WTC11 (cell line): ENCODE measurements at regions of chr22 and their contacts with region 1.

Region 1: DNA sequence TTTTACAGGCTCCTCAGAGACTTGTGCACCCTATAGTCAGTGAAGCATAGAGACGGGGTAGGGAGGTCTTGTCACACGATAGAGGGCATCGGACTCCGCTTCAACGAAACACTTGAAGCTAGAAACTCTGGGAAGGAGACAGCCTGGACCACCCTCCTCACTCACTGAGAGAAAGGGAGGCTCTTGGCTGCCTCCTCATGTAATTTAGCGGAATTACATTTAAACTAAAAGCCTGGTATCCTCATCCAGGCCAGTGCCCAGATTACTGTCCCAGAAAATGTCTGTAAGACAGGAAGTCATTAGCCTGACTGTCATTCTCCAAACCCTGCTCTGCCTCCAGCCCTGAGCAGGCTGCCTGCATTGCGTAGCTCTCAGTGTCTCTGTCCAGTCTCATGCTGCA is 36.0 kb downstream of the TTLL1 start:
- DNase-seq: peak; percentile 24
- ATAC-seq: peak; percentile 74
- H3K4me3 Mint-ChIP-seq: no peak overlapping the region
- H3K27ac Mint-ChIP-seq: no peak overlapping the region
- H3K4me1 Mint-ChIP-seq: no peaks in the 10 kb centered on the region
- H3K27me3 Mint-ChIP-seq: no peaks in the 10 kb centered on the region
- CTCF ChIP-seq: peak; percentile 60

Region 2: DNA sequence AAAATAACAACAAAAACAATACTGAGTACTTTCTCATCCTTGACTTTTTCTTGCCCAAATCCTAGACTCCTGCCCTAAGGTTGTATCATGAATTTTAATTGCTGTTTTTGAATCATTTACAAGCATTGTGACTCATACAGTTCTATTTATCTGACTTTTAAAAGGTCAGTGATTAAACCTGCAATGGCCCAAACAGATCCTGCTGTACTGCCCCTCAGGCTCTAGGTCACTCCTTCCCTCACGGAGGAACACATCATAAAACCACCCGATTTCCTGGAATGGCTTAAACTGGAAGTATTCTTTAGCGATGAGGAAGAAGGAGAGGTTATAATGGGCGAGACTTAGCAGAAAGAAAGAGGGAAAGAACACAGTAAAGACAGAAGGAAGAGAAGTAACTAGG is 208.4 kb before region 1 on chr22:
- CTCF ChIA-PET with region 1: interaction called, 10 read pairs
- POLR2A ChIA-PET with region 1: no interaction called
- DNase-seq: no peak
- ATAC-seq: no peak
- H3K4me3 Mint-ChIP-seq: no peak overlapping the region
- H3K27ac Mint-ChIP-seq: no peak overlapping the region
- H3K4me1 Mint-ChIP-seq: no peaks in the 10 kb centered on the region
- H3K27me3 Mint-ChIP-seq: no peaks in the 10 kb centered on the region
- CTCF ChIP-seq: no peak

Region 3: GRCh38 chr22:42901790-42902508 is 151.2 kb before region 1 on chr22:
- CTCF ChIA-PET with region 1: interaction called, 15 read pairs
- POLR2A ChIA-PET with region 1: no interaction called
- DNase-seq: no peak
- ATAC-seq: no peak
- H3K4me3 Mint-ChIP-seq: no peak overlapping the region
- H3K27ac Mint-ChIP-seq: 0 out of 2 replicates have a peak overlapping the region, but pooled peaks have one; percentile 13
- H3K4me1 Mint-ChIP-seq: peaks cover 22% of the 10 kb centered on the region
- H3K27me3 Mint-ChIP-seq: no peaks in the 10 kb centered on the region
- CTCF ChIP-seq: 0 out of 2 replicates have a peak, but pooled peaks have one; percentile 7

Region 4: DNA sequence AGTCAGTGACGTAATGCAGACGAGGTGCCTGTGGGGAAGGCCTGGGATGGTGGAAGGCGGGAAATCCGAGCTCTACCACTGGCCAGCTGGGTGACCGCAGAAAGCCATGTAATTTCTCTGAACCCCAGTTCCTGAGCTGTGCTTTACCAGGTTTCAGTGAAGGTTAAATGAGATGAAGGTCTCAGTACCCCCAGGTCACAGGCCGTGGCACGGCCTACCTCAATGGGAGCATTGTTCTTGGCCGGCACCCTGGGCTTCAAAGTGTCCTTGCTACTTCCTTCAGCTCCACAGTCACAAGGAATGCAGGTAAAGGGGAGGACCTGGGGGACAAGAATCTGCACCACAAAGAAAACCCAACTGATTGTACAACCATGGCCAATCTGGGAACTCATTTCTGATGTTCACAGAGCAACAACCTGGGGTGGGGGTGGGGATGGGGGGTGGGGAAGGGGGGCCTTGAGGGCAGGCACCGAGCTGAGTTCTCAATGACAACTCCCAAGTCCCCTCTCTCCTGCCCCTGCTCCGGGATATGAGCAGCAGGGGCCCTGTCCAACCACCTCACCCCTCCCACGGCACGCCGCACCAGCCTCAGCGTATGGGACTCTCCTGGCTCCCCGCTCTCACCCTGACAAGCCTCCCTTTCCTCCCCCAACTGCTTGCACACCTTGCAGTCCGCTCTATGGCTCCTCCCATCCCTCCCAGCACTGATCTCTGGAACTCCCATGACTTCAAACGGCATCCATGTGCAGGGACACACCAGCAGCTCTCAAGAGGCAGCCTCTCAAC is 137.0 kb before region 1 on chr22:
- CTCF ChIA-PET with region 1: interaction called, 13 read pairs
- POLR2A ChIA-PET with region 1: no interaction called
- DNase-seq: peak; percentile 42
- ATAC-seq: peak; percentile 87
- H3K4me3 Mint-ChIP-seq: no peak overlapping the region
- H3K27ac Mint-ChIP-seq: peak overlapping the region; percentile 92
- H3K4me1 Mint-ChIP-seq: peaks cover 38% of the 10 kb centered on the region
- H3K27me3 Mint-ChIP-seq: no peaks in the 10 kb centered on the region
- CTCF ChIP-seq: no peak

Region 5: DNA sequence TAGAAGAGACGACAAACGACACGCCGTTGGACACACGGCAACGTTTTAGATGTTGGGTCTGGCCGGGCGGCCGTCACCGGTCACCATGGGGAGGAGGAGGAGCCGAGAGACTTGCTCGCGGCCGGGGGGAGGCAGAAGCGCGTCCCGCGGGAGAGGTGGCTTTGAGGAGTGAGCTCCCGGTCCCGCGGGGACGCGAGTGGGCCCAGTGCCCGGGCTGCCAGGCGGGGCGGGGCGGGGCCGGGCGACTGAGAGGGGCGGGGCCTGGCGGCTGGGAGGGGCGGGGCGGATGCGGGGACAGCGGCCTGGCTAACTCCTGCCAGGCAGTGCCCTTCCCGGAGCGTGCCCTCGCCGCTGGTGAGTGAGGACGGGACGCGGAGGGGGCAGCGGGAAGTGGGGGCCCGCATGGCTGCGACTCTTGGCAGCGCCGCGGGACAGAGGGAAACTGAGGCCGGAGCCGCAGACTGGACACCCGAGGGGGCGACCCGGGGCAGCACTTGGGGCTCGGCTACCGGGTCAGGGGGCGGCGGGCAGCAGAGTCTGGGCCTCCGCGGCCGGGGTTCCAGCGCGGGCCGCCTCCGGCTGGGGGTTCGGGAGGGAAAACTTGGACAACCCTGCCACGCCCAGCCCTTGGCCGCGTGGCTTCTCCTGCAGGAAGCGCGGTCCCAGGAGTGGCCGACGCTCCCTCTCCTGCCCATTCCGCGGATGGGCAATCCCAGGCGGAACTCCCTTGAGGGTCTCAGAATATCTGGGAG is 98.3 kb after region 1 on chr22 and contains the start of gene TSPO:
- CTCF ChIA-PET with region 1: no interaction called
- POLR2A ChIA-PET with region 1: no interaction called
- DNase-seq: no peak
- ATAC-seq: peak; percentile 67
- H3K4me3 Mint-ChIP-seq: peak within 1 kb of the TSS; percentile 88
- H3K27ac Mint-ChIP-seq: no peak within 1 kb of the TSS
- H3K4me1 Mint-ChIP-seq: peaks cover 8% of the 10 kb centered on the region
- H3K27me3 Mint-ChIP-seq: peaks cover 14% of the 10 kb centered on the region
- CTCF ChIP-seq: no peak
- total RNA-seq, gene TSPO: 21.9 to 28.6 TPM (median 23.8 TPM) in 3 replicates